Calu3 (cell line): ENCODE measurements at regions of chr2 and their contacts with region 1.

Region 1: DNA sequence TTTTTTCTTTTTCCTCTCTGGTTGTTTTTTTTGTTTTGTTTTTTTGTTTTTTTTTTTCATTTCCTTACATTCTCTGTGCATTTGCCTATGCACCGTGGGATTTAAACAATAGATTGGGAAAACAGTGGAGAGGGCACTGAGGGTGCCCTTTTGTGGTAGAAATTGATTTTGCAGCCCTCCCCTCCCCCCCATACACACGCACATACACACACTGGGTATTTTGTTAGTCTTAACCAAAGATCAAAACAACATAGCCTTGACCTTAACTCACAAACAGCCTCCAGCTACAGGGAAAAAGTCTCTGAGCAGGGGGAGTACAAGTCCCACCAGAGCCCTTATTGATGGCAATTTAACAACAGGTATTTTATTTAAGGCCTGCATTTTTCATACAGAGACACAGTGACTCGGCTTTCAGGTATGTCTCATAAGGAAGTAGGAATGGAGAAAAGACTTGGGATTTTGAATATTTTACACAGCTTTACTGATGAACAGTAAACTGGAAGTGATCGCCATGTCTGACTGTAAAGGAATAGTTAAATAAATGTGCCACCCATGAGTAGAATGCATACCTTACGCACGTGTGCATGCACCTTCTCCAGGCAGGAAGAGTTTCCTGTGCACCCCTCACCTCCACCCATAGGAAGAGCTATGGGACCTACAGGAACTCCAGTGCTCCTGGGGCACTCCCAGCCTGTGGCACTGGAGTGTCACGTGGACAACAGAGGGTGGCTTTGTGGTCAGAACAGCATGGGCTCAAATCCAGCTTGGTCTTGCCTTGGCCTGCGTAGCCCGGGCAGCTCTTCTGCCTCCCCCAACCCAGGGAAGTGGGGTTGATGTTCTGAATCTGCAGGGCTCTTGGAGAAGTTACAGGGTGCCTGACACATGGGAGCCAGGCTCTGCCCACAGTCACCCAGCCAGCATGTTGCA is 266.4 kb downstream of the ANAPC1 start:
- DNase-seq: peak; percentile 61
- H3K4me3 Mint-ChIP-seq: peak overlapping the region; percentile 54
- H3K27ac Mint-ChIP-seq: peak overlapping the region; percentile 92
- H3K4me1 Mint-ChIP-seq: peaks cover 52% of the 10 kb centered on the region
- H3K27me3 Mint-ChIP-seq: no peaks in the 10 kb centered on the region
- CTCF ChIP-seq: no peak

Region 2: DNA sequence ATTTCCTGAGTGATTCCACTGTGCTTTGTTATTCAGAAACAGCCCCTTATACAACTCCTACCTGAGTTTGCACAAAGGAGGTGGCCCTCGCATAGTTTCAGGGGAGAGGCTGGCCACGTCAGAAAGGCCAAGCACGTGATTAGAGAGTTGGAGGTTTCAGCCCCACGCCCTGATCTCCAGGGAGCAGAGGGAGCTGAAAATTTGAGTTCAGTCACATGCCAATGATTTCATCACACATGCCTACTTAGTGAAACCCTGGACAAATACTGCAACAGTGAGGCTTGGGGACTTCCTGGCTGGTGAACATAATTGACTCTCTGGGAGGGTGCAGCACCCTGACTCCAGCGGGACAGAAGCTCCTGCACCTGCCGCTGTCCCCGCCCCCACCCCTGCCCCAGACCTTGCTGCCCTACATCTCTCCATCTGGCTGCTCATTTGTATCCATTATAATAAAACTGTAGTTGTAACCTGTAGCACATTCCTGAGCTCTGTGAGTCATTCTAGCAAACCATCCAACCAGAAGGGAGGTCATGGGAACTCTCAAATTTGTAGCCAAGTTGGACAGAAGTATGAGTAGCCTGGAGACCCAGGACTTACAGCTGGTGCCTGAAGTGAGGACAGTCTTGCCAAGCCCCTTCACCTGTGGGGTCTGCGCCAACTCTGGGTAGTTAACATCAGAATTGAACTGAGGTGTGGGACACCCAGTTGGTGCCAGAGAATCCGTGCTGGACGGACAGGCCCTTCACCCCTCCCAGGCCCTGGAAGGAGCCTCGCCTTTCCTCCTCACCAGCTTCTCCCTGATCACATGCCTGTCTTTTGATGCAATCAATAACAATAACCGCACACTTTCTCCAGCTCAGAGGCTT is 42.1 kb after region 1 on chr2:
- CTCF ChIA-PET with region 1: interaction called, 9 read pairs
- intact Hi-C with region 1: loop called (anchors 2 kb)
- DNase-seq: peak; percentile 91
- H3K4me3 Mint-ChIP-seq: peak overlapping the region; percentile 56
- H3K27ac Mint-ChIP-seq: peak overlapping the region; percentile 94
- H3K4me1 Mint-ChIP-seq: peaks cover 56% of the 10 kb centered on the region
- H3K27me3 Mint-ChIP-seq: no peaks in the 10 kb centered on the region
- CTCF ChIP-seq: no peak

Region 3: DNA sequence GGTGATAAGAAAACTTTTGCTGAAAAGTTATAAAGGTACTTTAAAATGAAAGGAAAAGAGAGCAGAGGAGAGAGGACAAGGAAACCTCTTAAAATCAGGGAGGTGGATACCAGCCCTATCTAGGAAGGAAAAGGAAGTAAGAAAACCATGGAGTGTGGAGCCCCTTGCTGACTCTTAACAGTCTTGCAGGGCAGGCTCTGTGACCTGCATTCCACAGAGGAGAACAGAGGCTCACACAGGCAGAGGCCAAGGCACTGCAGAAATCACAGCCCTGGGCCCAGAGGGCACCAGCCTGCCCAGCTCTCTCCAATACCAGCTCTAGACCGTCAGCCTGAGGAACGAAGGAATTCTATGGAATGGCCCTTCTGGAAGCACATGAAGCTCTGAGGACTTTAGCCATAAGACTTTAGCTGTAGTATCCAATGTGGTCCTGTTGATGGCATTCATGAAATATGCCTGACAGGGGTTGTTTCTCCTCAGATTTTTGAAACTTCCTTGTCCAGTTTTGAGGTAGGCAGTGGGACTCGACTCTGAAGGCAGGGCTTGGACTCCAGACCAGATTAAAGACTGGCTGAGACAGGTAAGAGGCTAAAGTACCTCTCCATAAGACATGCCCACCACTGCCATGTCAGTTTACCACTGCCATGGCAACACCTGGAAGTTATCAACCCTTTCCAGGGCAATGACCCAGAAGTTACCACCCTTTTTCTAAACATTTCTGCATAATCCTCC is 50.1 kb after region 1 on chr2:
- CTCF ChIA-PET with region 1: interaction called, 3 read pairs
- intact Hi-C with region 1: loop called (anchors 2 kb)
- DNase-seq: peak; percentile 60
- H3K4me3 Mint-ChIP-seq: no peak overlapping the region
- H3K27ac Mint-ChIP-seq: peak overlapping the region; percentile 73
- H3K4me1 Mint-ChIP-seq: peaks cover 29% of the 10 kb centered on the region
- H3K27me3 Mint-ChIP-seq: no peaks in the 10 kb centered on the region
- CTCF ChIP-seq: no peak

Region 4: GRCh38 chr2:111698743-111699554 is 81.4 kb after region 1 on chr2:
- CTCF ChIA-PET with region 1: interaction called, 16 read pairs
- intact Hi-C with region 1: no loop called
- DNase-seq: peak; percentile 85
- H3K4me3 Mint-ChIP-seq: peak overlapping the region; percentile 54
- H3K27ac Mint-ChIP-seq: peak overlapping the region; percentile 95
- H3K4me1 Mint-ChIP-seq: peaks cover 45% of the 10 kb centered on the region
- H3K27me3 Mint-ChIP-seq: no peaks in the 10 kb centered on the region
- CTCF ChIP-seq: no peak

Region 5: DNA sequence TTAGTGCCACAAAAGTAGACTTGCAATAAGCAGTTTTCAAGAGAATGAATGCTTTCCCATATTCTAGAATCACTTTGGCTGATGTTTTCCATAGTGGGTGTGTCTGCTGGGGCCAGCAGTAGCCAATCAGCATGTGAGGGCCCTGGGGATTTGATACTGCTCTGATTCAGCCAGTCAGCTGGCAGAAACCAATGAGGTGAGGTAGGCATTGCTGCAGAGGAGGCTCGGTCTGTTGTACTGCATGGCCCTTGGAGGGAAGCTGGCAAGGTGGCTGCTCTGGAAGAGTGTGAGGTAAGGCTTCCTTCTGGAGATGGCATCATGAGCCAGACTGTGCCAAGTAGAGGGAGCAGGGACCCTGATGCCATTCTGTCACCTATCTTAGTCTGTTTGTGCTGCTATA is 460.3 kb after region 1 on chr2:
- CTCF ChIA-PET with region 1: no interaction called
- intact Hi-C with region 1: no loop called
- DNase-seq: no peak
- H3K4me3 Mint-ChIP-seq: no peak overlapping the region
- H3K27ac Mint-ChIP-seq: no peak overlapping the region
- H3K4me1 Mint-ChIP-seq: peaks cover 32% of the 10 kb centered on the region
- H3K27me3 Mint-ChIP-seq: no peaks in the 10 kb centered on the region
- CTCF ChIP-seq: no peak

Region 6: GRCh38 chr2:112092286-112093041 is 474.9 kb after region 1 on chr2:
- CTCF ChIA-PET with region 1: no interaction called
- intact Hi-C with region 1: no loop called
- DNase-seq: no peak
- H3K4me3 Mint-ChIP-seq: no peak overlapping the region
- H3K27ac Mint-ChIP-seq: no peak overlapping the region
- H3K4me1 Mint-ChIP-seq: peaks cover 13% of the 10 kb centered on the region
- H3K27me3 Mint-ChIP-seq: no peaks in the 10 kb centered on the region
- CTCF ChIP-seq: no peak